ENCODE measurements at regions of chr10 and their contacts with region 1.

Region 1: GRCh38 chr10:17430647-17431355 is 23.6 kb downstream of the ST8SIA6 start:
- DNase-seq: peak; percentile 45 to 94 (median 68)

Region 2: DNA sequence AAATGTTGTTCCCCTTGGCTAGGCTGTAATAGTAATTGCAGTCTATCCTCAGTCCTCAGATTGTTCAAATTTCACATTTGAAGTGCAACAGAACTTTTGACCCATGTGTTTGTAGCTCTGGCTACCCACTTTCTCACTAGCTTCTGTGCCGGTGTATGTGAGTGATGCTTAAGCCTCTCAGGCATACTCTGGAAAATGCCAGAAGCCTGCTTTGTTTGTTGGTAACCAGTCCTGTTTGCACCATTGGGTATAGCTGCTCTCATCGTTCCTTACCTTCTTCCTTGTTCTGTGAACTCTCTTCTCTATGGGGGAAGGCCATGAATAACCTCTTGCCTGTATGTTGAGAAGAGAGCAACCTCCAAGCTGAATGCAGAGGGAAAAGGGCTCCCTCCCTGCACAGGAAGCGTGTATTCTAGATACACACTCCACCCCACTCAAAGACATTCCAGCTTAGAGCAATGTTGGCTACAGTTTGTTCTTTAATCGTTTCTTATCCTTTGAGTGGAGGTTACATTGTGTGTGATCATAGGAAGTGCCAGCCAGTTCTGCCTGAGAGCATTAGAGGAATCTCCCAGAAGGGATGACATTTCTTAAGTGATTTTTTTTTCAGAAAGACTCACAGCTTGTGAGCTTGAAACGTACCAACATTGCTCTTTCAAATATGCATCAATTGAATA is 949.6 kb before region 1 on chr10:
- intact Hi-C with region 1: no loop called
- DNase-seq: no peak

Region 3: DNA sequence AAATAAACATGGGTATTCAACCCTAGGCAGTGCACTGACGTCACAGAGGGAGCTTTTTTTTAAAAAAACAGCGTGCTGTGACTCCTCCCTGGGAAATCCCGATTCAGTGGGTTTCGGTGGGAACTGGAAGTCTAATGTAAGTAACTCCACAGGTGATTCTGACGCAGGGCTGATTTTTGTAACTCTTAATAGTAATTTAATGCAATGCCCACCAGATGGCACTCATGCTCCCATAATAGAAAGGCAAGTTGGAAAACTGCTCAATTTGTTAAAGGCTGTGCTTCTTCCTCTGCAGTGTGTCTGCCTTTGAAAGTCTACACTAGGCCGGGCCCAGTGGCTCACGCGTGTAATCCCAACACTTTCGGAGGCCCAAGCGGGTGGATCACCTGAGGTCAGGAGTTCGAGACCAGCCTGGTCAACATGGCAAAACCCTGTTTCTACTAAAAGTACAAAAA is 602.7 kb before region 1 on chr10:
- intact Hi-C with region 1: loop called (anchors 5 kb)
- DNase-seq: peak in 5 of 10 donors; percentile 19 to 83 (median 39)

Region 4: DNA sequence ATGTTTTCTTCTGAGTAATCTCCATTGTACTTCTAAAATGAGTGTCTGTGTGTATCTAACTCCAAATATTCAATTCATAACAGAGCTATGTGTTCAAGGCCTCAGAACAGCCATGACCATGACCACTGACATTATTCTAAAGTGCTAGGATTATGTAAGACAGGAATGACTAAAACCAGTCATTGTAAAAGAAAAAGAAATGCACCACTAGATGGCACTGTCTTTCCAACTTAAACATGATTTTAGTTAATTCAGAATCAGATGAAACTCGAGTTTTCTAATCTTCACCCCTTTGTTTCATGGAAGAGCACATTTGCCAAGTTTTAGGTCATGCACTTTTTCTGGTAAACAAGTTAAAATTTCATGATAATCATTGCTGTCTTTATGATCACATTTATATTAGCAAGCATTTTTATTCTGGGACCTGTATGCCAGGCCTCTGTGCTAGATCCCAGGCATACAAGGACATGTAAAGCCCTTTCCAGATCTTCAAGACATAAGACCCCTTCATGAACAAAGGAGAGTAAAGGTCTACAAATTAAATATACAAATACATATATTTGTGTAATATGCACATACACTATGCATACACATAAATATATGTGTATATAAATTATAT is 587.4 kb before region 1 on chr10:
- intact Hi-C with region 1: loop called (anchors 5 kb)
- DNase-seq: no peak

Measured in posterior cingulate gyrus (tissue), 11 donors.